Activated CD4-positive, alpha-beta memory T cell treated with anti-CD3 and anti-CD28 coated beads, Interleukin-2, amount 10 ng/mL, durations not matched to agents 7 days and 5 days (primary cell): ENCODE measurements at regions of chr4 and their contacts with region 1.

Region 1: GRCh38 chr4:38179690-38180377 is 219.6 kb downstream of the PTTG2 start:
- DNase-seq: peak; percentile 76
- H3K4me3 Mint-ChIP-seq: no peak overlapping the region
- H3K27ac Mint-ChIP-seq: no peak overlapping the region
- H3K4me1 Mint-ChIP-seq: peaks cover 38% of the 10 kb centered on the region
- H3K27me3 Mint-ChIP-seq: peaks cover 42% of the 10 kb centered on the region

Region 2: GRCh38 chr4:37812710-37813109 is 367.1 kb before region 1 on chr4:
- CTCF ChIA-PET with region 1: no interaction called
- POLR2A ChIA-PET with region 1: no interaction called
- DNase-seq: no peak
- H3K4me3 Mint-ChIP-seq: no peak overlapping the region
- H3K27ac Mint-ChIP-seq: no peak overlapping the region
- H3K4me1 Mint-ChIP-seq: peaks cover 23% of the 10 kb centered on the region
- H3K27me3 Mint-ChIP-seq: no peaks in the 10 kb centered on the region

Region 3: DNA sequence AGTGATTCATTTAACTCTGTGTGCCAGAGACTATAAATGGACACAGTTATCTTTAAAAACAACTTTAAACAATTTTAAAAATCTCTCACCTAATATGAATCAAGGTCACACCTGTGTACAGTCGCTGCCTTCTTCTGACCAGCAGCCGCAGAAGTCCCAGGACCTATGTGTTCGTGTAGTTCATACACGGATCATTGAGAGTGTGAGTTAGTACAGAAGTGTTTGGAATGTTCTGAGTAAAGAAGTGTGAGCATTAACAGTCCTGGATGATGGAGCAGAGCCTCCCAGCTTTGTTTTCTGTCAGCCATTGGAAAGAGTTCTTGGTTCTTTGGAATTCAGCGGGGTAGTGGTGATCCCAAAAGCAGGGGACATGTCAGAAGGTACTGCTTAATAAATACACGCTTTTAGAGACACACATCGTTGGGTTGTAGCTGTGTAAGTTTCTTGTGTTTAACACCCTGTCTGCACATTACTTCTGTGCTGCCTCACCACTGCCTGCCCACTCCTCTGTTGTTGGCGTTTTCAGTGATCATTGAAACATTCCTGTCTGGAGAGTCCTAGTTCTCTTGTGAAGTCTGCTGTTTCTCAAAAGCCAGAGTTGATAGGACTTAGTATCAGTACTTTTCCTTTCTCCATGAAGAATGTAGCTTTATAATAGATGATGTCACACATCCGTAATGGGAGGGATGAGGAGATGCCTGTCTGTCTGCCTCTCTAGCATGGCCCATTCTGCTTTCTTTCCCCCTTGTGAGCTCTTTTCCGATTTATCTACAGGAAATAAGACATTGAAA is 129.1 kb before region 1 on chr4:
- CTCF ChIA-PET with region 1: no interaction called
- POLR2A ChIA-PET with region 1: no interaction called
- DNase-seq: no peak
- H3K4me3 Mint-ChIP-seq: no peak overlapping the region
- H3K27ac Mint-ChIP-seq: no peak overlapping the region
- H3K4me1 Mint-ChIP-seq: no peaks in the 10 kb centered on the region
- H3K27me3 Mint-ChIP-seq: no peaks in the 10 kb centered on the region

Region 4: DNA sequence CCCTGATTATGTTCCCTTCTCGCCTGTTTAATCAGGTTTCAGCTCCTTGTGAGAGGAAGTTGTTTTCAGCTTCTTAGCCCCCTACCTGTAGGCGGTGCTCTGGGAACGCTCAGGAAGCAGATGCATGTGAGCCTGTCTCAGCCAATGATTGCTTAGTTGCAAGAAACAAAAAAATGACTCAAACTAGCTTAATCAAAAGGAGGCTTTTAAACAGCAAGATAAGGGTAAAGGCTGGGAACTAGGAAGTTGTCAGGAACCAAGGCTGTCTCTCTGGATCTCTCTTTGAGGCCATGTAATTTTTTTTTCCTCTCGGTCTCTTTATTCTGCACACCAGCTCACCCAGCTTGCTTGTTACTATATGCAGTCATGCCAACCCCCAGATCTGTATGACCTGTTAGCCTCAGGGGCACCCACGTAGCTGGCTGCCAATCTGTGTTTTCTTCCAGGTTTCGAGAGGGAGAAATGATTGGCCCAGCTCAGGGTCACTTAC is 110.5 kb before region 1 on chr4:
- CTCF ChIA-PET with region 1: interaction called, 98 read pairs
- POLR2A ChIA-PET with region 1: interaction called, 3 read pairs
- DNase-seq: peak; percentile 31
- H3K4me3 Mint-ChIP-seq: no peak overlapping the region
- H3K27ac Mint-ChIP-seq: no peak overlapping the region
- H3K4me1 Mint-ChIP-seq: peaks cover 22% of the 10 kb centered on the region
- H3K27me3 Mint-ChIP-seq: no peaks in the 10 kb centered on the region

Region 5: DNA sequence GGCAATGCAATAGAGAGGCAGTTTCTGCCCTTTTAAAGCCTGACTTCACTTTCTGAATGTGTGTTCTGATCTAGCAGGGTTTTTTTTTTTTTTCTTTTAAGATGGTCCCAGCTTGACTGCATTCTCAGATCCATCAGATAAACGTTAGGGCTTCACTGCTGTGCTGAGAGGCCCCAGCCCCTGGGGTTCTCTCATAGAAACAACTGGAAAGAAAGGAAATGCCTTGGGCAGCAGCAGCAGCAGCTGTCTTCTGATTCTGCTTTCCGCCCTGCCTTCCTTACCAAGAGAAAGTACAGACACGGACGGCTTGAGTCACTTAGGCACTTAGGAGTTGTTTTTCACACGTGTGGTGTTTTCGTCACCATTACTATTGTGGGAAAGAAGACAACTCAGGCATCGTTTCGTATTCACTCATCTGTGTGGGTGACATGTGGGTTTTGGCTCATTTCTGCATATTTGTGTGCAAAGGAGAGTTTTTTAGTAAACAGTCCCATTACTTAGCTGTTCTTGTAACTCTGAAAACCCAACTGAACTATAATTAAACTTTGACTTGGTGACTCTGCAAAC is 47.6 kb before region 1 on chr4:
- CTCF ChIA-PET with region 1: interaction called, 59 read pairs
- POLR2A ChIA-PET with region 1: interaction called, 65 read pairs
- DNase-seq: peak; percentile 83
- H3K4me3 Mint-ChIP-seq: peak overlapping the region; percentile 54
- H3K27ac Mint-ChIP-seq: peak overlapping the region; percentile 91
- H3K4me1 Mint-ChIP-seq: peaks cover 78% of the 10 kb centered on the region
- H3K27me3 Mint-ChIP-seq: peaks cover 4% of the 10 kb centered on the region

Region 6: GRCh38 chr4:38160487-38161207 is 19.2 kb before region 1 on chr4:
- CTCF ChIA-PET with region 1: interaction called, 15 read pairs
- POLR2A ChIA-PET with region 1: interaction called, 13 read pairs
- DNase-seq: peak; percentile 57
- H3K4me3 Mint-ChIP-seq: no peak overlapping the region
- H3K27ac Mint-ChIP-seq: peak overlapping the region; percentile 48
- H3K4me1 Mint-ChIP-seq: peaks cover 71% of the 10 kb centered on the region
- H3K27me3 Mint-ChIP-seq: peaks cover 3% of the 10 kb centered on the region

Region 7: DNA sequence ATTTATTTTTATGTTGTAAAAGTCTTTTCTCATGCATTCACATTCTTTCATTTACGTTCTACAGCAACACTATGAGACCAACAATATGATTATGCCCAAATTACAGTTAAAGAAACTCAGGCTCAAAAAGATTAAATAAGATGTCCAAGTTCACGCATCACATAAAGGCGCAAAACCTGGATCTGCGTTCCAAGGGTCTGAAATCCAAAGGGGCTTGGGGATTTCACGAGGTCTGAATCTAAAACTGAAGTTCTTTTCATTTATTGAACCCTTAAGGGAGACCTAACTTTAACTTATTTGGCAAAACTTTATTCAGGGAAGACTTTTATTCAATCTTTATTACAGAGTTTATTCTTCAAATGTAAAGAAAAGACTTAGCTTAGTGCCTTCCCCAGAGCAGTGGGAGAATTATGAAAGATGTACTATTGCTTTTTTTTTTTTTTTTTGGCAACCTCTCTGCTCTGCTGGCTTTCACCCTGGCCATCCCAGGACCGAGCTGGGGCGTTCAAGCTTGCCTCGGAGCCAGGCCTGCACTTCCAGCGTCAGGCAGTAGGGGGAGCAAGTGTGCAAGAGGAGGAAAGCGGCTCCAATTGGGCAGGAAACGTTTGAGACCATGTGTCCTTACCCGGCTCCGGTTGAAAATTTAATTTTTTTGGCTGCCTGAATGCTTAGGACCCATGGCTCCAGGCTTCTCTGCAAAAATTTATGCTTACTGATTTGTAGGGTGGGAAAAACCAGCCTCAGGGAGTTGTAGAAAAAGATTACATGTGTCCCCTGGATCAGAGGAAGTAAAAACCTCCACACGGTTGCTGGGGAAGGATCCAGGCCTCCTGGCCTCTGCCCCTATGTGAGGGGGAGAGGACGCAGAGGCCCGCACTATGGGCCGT is 139.9 kb after region 1 on chr4:
- CTCF ChIA-PET with region 1: interaction called, 71 read pairs
- POLR2A ChIA-PET with region 1: interaction called, 4 read pairs
- DNase-seq: peak; percentile 92
- H3K4me3 Mint-ChIP-seq: peak overlapping the region; percentile 76
- H3K27ac Mint-ChIP-seq: peak overlapping the region; percentile 92
- H3K4me1 Mint-ChIP-seq: peaks cover 34% of the 10 kb centered on the region
- H3K27me3 Mint-ChIP-seq: peaks cover 18% of the 10 kb centered on the region

Region 8: DNA sequence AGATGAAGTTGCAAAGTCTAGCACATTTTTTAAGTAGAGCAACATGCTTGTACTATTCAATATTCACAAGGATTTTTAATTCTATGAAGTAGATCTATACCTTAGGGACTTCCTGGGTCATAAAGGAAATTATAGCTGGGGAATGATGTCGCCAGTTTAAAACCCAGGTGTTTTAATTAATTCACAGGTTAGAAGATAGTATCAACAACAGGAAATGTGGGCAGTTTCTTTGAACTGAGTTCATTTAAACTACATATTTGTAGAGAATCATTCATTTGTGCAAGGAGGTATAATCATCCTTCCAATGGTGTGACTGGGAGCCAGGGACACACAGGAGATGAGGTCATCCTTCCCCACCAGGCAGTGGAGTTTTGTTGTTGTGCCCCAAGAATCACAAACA is 302.9 kb after region 1 on chr4:
- CTCF ChIA-PET with region 1: no interaction called
- POLR2A ChIA-PET with region 1: no interaction called
- DNase-seq: no peak
- H3K4me3 Mint-ChIP-seq: no peak overlapping the region
- H3K27ac Mint-ChIP-seq: no peak overlapping the region
- H3K4me1 Mint-ChIP-seq: peaks cover 7% of the 10 kb centered on the region
- H3K27me3 Mint-ChIP-seq: no peaks in the 10 kb centered on the region

Region 9: DNA sequence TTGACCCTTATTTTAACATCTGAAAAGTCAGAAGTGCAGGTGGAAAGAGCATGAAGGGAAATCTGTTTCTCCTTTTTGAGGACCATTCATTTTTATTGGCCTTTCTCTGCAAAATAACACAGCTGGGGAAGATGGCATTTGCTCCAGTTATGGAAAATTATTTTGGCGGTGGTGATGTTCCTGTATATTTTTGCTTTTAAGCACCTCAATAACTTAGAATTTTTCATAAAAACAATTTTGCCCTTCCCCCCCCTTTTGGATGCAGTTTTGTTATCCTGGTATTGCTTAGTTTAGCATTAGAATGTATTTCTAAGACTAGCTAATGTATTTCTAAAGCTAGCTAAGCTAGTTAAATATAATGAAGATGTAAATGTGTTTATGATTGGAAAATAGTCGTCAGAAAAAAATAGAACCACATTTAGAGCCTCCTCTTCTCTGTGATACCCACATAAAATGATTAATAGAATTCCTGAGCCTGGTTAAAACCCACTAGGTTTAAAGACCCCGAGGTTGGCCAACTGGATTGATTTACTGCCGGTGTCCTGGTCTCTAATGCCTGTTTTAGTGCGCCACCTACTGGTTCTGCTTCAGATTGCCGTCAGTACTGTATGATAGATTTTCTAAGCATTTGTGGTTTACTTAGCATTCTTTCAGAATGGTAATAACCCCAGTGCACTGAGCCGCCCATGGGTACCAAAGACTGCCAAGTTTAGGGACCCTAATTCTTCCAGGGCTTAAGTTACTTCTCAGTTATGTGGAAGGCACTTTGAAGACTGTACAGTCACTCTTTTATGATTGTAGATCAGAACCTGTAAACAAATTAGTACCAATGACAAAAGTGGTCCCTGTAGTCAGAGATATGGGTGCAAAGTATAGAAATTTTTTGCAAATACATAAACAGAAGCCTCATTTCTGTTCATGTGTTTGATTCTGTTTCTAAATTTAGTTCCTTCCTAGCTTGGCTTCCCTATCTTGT is 495.6 kb after region 1 on chr4:
- CTCF ChIA-PET with region 1: interaction called, 89 read pairs
- POLR2A ChIA-PET with region 1: interaction called, 9 read pairs
- DNase-seq: peak; percentile 83
- H3K4me3 Mint-ChIP-seq: no peak overlapping the region
- H3K27ac Mint-ChIP-seq: no peak overlapping the region
- H3K4me1 Mint-ChIP-seq: peaks cover 59% of the 10 kb centered on the region
- H3K27me3 Mint-ChIP-seq: no peaks in the 10 kb centered on the region

Region 10: DNA sequence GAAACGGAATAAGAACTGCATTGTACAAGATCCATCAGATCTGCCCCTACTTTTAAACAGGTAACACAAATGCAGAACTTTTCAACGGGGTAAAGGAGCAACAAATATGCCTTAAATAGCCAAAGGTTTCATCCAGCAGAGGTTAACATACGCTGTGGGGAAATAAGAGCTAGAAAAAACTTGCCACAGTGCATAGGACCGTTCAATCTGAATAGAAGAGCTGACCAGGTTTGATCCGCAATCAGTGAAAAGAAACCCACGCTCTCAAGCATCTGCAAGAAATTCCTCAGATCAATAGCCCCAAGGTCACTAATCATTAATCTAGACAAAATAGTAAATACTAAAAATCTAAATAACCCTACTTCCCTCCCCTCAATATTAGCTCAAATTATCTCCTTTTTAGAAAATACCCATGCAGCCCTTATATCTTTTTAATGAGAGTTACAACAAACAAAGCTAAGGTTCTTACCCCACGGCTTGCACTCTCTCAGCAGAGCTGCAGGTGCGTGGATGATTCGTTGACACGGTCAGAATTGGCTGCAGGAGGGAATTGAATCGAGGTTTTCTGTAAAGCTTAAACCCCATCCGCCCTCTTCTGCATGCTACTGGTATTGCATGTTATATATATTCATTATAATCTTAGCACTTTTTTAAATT is 602.7 kb after region 1 on chr4 and contains the start of gene TLR10:
- CTCF ChIA-PET with region 1: interaction called, 18 read pairs
- POLR2A ChIA-PET with region 1: no interaction called
- DNase-seq: peak; percentile 32
- H3K4me3 Mint-ChIP-seq: no peak within 1 kb of the TSS
- H3K27ac Mint-ChIP-seq: no peak within 1 kb of the TSS
- H3K4me1 Mint-ChIP-seq: peaks cover 2% of the 10 kb centered on the region
- H3K27me3 Mint-ChIP-seq: peaks cover 6% of the 10 kb centered on the region
- total RNA-seq, gene TLR10: 0.40 to 0.53 TPM